Posterior vena cava (tissue), 2 donors: ENCODE measurements at regions of chr11 and their contacts with region 1.

Region 1: GRCh38 chr11:15027011-15027410 is 46.4 kb upstream of the CALCB start:
- DNase-seq: no peak

Region 2: DNA sequence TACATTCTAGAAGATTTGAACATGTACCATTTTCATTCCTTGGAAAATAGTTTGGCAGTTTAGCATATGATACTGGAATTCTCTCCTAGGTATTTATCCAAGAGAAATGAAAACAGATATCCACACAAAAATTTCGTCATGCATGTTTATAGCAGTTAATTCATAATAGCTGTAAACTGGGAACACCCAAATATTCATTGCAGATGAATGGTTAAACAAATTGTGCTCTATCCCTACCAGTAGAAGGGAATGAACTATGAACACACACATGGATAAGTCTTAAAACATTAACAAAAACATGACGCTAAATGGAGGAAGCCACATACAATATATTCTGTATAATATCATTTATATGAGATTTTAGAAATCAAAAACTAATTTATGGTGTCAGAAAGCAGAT is 321.9 kb before region 1 on chr11:
- intact Hi-C with region 1: loop called in 1 of 2 experiments (anchors 5 kb)
- DNase-seq: no peak